ENCODE measurements at regions of chr2 and their contacts with region 1.

Region 1: DNA sequence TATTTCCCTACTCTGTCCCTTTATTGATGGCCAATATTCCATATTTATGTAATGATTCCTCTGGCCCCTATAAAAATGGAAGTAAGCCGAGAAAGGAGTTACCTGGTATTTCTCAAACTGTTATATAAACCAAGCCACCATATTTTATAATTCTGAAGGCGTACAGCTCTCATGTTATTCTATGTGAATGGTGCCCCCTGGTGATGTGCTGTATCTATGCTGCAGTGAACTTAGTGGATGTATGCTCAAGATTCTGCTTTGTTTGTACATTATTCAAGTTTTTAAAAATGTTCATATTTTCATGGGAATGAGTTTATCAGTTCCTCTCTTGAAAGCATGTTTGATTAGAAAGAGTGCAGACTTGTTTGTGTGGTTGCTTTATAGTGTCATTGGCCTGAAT is 194.5 kb upstream of the LRRTM1 start:
- DNase-seq: peak; percentile 32
- H3K4me3 ChIP-seq: no peak overlapping the region
- H3K27ac ChIP-seq: no peak overlapping the region
- H3K4me1 ChIP-seq: no peaks in the 10 kb centered on the region
- H3K27me3 ChIP-seq: no peaks in the 10 kb centered on the region
- CTCF ChIP-seq: peak; percentile 60

Region 2: GRCh38 chr2:79935771-79936657 is 563.1 kb before region 1 on chr2:
- CTCF ChIA-PET with region 1: no interaction called
- POLR2A ChIA-PET with region 1: no interaction called
- intact Hi-C with region 1: loop called (anchors 5 kb)
- DNase-seq: peak; percentile 77
- H3K4me3 ChIP-seq: no peak overlapping the region
- H3K27ac ChIP-seq: no peak overlapping the region
- H3K4me1 ChIP-seq: no peaks in the 10 kb centered on the region
- H3K27me3 ChIP-seq: peaks cover 17% of the 10 kb centered on the region
- CTCF ChIP-seq: peak; percentile 76

Region 3: GRCh38 chr2:80073134-80073561 is 425.9 kb before region 1 on chr2:
- CTCF ChIA-PET with region 1: no interaction called
- POLR2A ChIA-PET with region 1: no interaction called
- intact Hi-C with region 1: loop called (anchors 10 kb)
- DNase-seq: peak; percentile 79
- H3K4me3 ChIP-seq: no peak overlapping the region
- H3K27ac ChIP-seq: no peak overlapping the region
- H3K4me1 ChIP-seq: no peaks in the 10 kb centered on the region
- H3K27me3 ChIP-seq: no peaks in the 10 kb centered on the region
- CTCF ChIP-seq: peak; percentile 72

Region 4: GRCh38 chr2:80326214-80326613 is 172.9 kb before region 1 on chr2:
- CTCF ChIA-PET with region 1: interaction called, 6 read pairs
- POLR2A ChIA-PET with region 1: no interaction called
- intact Hi-C with region 1: loop called (anchors 2 kb)
- DNase-seq: peak; percentile 44
- H3K4me3 ChIP-seq: no peak overlapping the region
- H3K27ac ChIP-seq: no peak overlapping the region
- H3K4me1 ChIP-seq: no peaks in the 10 kb centered on the region
- H3K27me3 ChIP-seq: peaks cover 18% of the 10 kb centered on the region
- CTCF ChIP-seq: peak; percentile 44; the same call in 1 of the 2 replicates

Region 5: GRCh38 chr2:80454628-80455027 is 44.5 kb before region 1 on chr2:
- CTCF ChIA-PET with region 1: no interaction called
- POLR2A ChIA-PET with region 1: no interaction called
- intact Hi-C with region 1: no loop called
- DNase-seq: no peak
- H3K4me3 ChIP-seq: no peak overlapping the region
- H3K27ac ChIP-seq: no peak overlapping the region
- H3K4me1 ChIP-seq: no peaks in the 10 kb centered on the region
- H3K27me3 ChIP-seq: no peaks in the 10 kb centered on the region
- CTCF ChIP-seq: no peak

Region 6: DNA sequence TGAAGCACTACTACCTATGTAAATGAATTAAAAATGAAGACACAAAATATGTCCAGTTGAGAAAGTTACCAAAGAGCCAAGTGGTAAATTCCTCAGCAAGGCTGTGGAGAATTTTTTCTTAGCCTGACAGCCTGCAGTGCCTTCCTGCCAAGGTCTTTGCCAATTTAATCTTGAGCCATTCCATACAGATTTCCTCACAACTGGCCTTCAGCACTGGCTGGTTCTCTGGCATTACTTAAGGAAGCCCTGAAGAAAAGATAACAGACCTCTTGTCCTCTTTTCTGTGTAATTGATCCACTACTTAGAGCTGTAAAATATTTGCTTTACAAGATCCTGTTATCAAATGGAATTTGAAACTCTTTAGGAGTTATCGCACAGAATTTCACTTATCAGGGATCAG is 139.7 kb after region 1 on chr2:
- CTCF ChIA-PET with region 1: no interaction called
- POLR2A ChIA-PET with region 1: no interaction called
- intact Hi-C with region 1: no loop called
- DNase-seq: no peak
- H3K4me3 ChIP-seq: no peak overlapping the region
- H3K27ac ChIP-seq: no peak overlapping the region
- H3K4me1 ChIP-seq: no peaks in the 10 kb centered on the region
- H3K27me3 ChIP-seq: no peaks in the 10 kb centered on the region
- CTCF ChIP-seq: no peak

Measured in A673 (cell line).